Gastrocnemius medialis (tissue), 4 donors: ENCODE measurements at regions of chr18 and their contacts with region 1.

Region 1: DNA sequence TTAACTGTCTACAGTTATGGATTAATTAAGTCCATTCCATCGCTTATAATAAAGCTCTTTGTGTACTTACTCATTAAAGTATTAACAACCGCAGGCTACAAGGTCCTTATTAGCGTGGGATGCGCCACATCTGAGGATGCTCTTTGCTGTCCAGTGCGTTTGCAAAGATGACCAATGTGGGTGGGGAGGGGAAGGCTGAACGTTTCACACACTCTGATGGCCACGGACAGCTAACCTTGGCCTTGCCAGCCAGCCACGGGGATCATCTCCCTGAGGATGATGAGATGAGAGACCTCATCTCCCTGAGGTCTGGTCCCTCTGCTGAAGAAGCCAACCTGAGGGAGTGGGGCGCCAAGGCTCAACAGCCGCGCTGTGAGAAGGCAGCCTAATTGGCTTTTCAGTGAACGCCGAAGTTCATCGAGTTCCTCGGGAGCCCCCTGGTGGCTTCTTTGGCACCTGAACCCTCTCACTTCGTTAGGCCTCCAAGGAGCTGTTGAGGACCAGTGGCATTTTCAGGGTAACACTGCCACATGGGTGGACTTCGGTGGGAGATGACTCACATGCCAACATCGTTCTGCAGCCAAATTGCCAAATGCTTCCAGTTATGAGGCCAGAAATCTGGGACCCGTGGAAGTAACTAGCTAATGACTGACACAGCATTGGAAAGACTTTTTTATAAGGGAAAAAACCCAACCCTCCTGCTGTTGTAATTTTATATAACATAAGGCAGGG is 69.3 kb upstream of the SEC11C start:
- DNase-seq: peak; percentile 64 to 75
- ATAC-seq: peak; percentile 83 to 94
- H3K4me3 ChIP-seq: no peak overlapping the region
- H3K27ac ChIP-seq: no peak overlapping the region
- H3K4me1 ChIP-seq: peaks cover 0 to 16% of the 10 kb centered on the region in 2 donors
- H3K27me3 ChIP-seq: no peaks in the 10 kb centered on the region
- CTCF ChIP-seq: peak; percentile 70 to 93 (median 90)
- POLR2A ChIP-seq: no peak

Region 2: DNA sequence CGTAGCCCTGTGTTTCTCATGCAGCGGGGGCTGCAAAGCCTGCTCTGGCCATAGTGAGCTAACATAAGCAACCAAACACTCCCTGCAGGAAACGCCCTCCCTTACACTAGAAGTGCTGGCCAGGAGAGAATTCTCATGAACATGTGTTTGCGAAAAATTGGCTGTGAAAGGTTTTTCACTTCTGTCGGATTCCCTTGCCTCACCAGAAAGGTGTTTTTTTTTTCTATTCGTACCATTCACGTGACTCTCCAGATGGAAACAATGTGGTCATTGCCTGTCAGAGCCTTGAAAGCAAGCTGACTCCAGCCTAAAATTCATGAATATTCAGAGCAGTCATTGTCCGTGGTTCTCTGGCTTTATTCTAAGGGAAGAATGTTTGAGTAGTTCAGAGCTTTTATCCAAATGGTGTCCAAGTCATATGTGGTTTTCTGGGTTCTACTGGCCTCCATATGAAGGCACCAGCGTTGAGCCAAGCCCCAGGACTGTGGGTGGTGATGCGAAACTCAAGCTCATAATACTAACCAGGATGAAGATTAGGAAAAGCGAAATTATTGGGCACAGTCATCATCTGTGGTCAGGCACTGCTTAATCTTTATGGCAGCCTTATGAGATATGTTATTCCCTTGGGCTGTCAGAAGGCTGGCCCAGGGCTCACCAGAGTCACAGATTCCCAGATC is 677.9 kb before region 1 on chr18:
- in situ Hi-C with region 1: no loop called
- intact Hi-C with region 1: loop called (anchors 10 kb)
- DNase-seq: no peak
- ATAC-seq: no peak
- H3K4me3 ChIP-seq: no peak overlapping the region
- H3K27ac ChIP-seq: peak overlapping the region; percentile 11 to 91 (median 86)
- H3K4me1 ChIP-seq: peaks cover 20 to 42% of the 10 kb centered on the region in 2 donors
- H3K27me3 ChIP-seq: no peaks in the 10 kb centered on the region
- CTCF ChIP-seq: no peak
- POLR2A ChIP-seq: no peak

Region 3: DNA sequence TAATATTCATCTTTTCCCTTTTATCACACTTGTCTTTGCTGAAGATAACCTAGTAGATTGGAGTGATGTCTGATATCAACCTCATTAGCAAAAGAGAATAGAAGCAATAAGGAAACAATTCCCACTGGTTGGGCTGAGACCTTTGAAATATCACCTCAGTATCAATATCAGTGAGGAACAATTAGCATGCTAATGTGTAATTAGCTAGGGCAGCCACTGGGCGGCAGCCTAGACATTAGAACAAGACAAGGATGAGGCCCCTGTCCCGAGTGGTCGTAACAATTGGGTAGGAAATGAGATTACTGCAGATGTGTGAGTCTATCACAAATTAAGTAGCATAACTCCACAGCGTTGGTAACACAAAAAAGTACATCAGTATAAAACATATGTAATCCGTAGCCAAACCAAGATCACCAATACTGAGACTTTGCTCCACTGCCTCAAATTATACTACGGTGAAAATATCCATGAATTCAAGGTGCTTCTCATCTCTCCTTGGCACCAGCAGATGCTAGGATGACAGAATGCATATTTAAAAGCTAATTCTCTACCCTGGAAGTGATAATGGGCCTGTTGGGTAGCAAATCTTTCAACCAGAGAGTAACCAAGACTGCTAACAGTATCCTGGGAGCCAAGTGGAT is 540.5 kb before region 1 on chr18:
- in situ Hi-C with region 1: loop called in 3 of 4 experiments (anchors 25 kb)
- intact Hi-C with region 1: no loop called
- DNase-seq: peak in 1 of 2 donors; percentile 38
- ATAC-seq: peak; percentile 23 to 53
- H3K4me3 ChIP-seq: no peak overlapping the region
- H3K27ac ChIP-seq: no peak overlapping the region
- H3K4me1 ChIP-seq: no peaks in the 10 kb centered on the region
- H3K27me3 ChIP-seq: no peaks in the 10 kb centered on the region
- CTCF ChIP-seq: peak; percentile 77 to 88 (median 83)
- POLR2A ChIP-seq: no peak

Region 4: GRCh38 chr18:58541789-58542425 is 528.4 kb before region 1 on chr18:
- in situ Hi-C with region 1: loop called in 3 of 4 experiments (anchors 25 kb)
- intact Hi-C with region 1: loop called (anchors 10 kb)
- DNase-seq: peak; percentile 56 to 61
- ATAC-seq: peak; percentile 89 to 94
- H3K4me3 ChIP-seq: no peak overlapping the region
- H3K27ac ChIP-seq: peak overlapping the region; percentile 64 to 82 (median 77)
- H3K4me1 ChIP-seq: peaks cover 53 to 56% of the 10 kb centered on the region in 2 donors
- H3K27me3 ChIP-seq: no peaks in the 10 kb centered on the region
- CTCF ChIP-seq: no peak
- POLR2A ChIP-seq: no peak

Region 5: DNA sequence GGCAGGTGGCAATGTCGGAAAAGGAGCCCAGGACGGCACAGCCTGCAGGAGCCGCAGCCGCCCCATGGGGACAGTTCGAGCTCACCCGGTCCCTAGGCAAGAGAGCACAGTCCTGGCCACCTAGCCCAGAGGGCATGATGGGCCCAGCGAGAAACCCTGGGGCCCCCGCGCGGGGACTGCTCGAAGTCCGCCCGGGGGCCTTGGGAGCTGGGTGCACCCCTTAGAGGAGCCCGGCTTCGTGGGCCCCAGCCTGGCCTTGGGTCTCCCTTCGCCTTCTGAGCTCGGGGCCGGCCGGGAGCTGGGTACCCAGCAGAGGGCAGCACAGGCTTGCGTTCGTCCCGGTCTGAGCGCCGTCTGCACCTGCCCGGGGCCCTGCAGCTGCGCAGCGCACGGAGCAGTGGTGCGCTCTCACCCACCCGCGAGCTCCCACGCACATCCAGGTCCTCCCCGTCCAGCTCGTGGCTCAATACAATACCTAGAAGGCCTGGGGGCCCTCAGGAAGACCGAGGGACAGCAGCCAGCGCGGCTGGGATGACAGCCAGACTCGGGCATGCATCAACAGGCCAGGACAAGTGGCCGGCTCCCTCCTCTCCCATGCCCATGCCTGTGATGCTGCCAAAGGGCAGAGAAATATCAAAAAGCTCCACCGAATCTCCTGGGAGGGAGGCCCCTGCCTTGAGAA is 301.9 kb before region 1 on chr18:
- in situ Hi-C with region 1: no loop called
- intact Hi-C with region 1: loop called (anchors 1 kb)
- DNase-seq: peak; percentile 53 to 69
- ATAC-seq: peak; percentile 82 to 87
- H3K4me3 ChIP-seq: peak overlapping the region; percentile 44 to 67 (median 52)
- H3K27ac ChIP-seq: peak overlapping the region in 3 of 4 donors; percentile 25 to 33 (median 28)
- H3K4me1 ChIP-seq: peaks cover 3 to 13% of the 10 kb centered on the region in 2 donors
- H3K27me3 ChIP-seq: no peaks in the 10 kb centered on the region
- CTCF ChIP-seq: peak; percentile 69 to 93 (median 90)
- POLR2A ChIP-seq: no peak

Region 6: GRCh38 chr18:58781627-58782194 is 288.6 kb before region 1 on chr18:
- in situ Hi-C with region 1: loop called in 1 of 4 experiments (anchors 5 kb)
- intact Hi-C with region 1: loop called (anchors 1 kb)
- DNase-seq: peak; percentile 64 to 74
- ATAC-seq: peak; percentile 87
- H3K4me3 ChIP-seq: no peak overlapping the region
- H3K27ac ChIP-seq: no peak overlapping the region
- H3K4me1 ChIP-seq: peaks cover 4 to 12% of the 10 kb centered on the region in 2 donors
- H3K27me3 ChIP-seq: no peaks in the 10 kb centered on the region
- CTCF ChIP-seq: peak; percentile 91 to 95 (median 92)
- POLR2A ChIP-seq: no peak

Region 7: DNA sequence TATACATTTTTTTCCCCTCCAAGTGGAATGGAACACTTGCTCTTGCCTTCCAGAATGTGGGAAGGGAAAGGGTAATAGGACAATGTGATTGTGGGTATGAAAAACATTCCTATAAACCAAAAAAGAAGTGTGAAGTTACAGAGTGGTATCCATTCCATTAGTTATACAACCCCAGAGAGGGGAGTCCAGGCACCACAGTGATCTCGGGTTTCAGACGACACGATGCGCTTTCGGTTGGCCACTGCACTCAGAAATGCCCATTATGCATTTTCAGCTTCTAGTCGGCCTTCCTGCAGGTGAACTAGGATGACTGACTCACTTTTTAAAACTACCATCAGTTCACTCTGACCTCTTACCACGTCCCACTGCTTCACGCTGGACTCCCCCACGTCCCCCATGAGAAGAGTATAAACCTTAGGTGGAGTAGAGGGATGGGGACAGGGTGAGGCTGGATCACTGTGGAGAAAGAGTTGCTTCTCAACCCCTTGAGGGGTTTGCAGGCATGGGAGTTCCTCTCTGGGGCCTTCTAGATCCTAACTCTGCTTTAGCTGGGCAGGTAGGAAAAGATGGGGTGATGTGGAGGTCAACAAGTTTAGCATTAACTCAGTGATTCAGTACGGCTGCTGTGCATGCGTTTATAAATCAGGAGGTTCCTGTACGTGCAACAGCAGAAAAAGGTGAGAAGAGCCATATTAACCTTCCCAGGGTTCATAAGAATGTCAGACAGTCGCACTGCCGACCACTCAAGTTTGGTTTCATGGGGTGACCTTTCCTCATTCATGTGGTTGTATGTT is 155.1 kb before region 1 on chr18:
- in situ Hi-C with region 1: no loop called
- intact Hi-C with region 1: no loop called
- DNase-seq: no peak
- ATAC-seq: peak; percentile 28 to 58
- H3K4me3 ChIP-seq: no peak overlapping the region
- H3K27ac ChIP-seq: peak overlapping the region; percentile 65 to 79 (median 76)
- H3K4me1 ChIP-seq: peaks cover 35 to 61% of the 10 kb centered on the region in 2 donors
- H3K27me3 ChIP-seq: no peaks in the 10 kb centered on the region
- CTCF ChIP-seq: no peak
- POLR2A ChIP-seq: no peak

Region 8: DNA sequence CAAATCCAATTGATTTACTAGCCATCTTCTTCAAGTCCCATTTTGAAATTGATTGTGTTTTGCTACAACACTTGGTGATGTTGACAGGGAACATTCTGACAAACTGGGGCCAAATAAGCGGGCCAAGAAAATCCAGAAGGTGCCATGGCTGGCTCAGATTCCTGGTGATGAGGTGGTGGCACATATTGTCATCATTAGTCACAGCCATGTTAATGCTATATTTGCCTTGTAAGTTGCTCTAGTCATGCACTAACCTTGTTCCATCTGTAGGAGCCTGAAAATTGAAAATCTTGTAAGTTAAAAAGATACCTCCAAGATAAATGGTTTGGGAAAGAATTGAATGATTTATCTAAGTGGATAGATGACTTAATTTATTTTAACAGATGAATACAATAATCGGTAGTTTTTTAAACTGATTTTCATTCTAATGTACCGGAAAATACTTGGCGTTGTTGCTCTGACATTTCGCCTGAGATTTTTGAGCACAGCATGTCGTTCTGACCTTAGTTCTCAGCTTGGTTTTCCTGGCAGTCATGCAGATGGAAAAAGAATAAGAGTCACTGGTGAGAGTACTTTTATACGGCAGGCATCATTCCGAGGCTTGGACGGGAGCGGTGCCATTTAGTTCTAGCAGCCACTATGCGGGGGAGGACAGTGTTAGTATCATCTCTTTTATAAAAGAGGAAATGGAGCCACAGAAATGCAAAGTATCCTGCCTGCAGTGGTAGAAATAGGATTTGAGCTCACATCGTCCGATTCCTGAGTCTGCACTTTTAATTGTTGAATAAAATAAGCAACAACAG is 71.7 kb before region 1 on chr18:
- in situ Hi-C with region 1: loop called in 1 of 4 experiments (anchors 10 kb)
- intact Hi-C with region 1: no loop called
- DNase-seq: peak; percentile 77 to 91
- ATAC-seq: peak; percentile 95 to 96
- H3K4me3 ChIP-seq: peak overlapping the region; percentile 11 to 42 (median 39)
- H3K27ac ChIP-seq: peak overlapping the region; percentile 90 to 94 (median 91)
- H3K4me1 ChIP-seq: peaks cover 31 to 50% of the 10 kb centered on the region in 2 donors
- H3K27me3 ChIP-seq: no peaks in the 10 kb centered on the region
- CTCF ChIP-seq: peak in 4 of 5 experiments; percentile 17 to 63 (median 28)
- POLR2A ChIP-seq: peak in 1 of 2 donors; percentile 49